Activated naive CD4-positive, alpha-beta T cell treated with anti-CD3 and anti-CD28 coated beads for 36 hours (primary cell): ENCODE measurements at regions of chr9 and their contacts with region 1.

Region 1: DNA sequence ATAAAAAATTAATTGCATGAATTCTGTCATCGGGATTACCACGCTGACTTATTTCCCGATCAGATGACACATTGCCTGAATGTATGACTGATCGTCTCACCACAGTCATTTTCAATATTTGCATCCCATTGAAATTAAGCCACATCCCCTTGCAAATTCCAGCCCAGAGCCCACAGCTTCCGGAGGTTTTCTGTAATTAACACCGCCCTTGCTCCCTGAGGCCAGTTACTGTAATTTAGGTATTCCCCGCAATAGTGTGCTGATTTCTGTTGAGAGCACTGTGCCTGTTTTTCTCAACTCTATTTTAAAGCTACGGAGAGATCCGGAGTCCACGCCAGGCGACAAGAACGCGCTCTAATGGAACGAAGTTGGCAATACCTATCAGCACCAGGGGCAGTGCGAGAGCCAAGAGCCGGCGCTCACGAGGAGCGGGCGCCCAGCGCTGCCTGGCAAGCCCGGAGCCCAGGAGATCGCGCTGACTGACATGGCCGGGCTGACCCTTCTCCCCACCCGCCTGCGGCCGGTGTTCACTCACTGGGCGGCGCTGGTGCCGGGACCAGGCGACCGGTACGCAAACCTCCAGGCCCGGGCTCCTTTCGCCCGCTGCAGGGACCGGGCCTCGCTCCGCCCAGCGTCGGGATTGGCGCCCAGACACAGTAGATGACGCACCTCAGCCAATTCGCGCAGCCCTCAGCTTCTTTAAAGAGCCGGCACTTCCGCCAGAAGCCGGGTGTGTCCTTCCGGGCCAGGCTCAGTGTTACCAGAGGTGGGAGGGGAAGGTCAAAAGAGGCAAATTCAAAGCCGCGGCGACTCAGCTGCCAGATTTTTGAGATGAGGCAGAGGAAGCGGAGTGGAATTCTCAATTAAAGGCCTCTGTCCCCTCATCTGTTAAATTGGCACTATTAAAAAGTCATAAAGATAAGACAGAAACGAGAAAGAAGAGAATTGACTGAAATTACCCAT is at the start of gene PLGRKT:
- DNase-seq: peak; percentile 95
- H3K4me3 Mint-ChIP-seq: peak within 1 kb of the TSS; percentile 92
- H3K27ac Mint-ChIP-seq: peak within 1 kb of the TSS; percentile 98
- H3K4me1 Mint-ChIP-seq: peaks cover 51% of the 10 kb centered on the region
- H3K27me3 Mint-ChIP-seq: no peaks in the 10 kb centered on the region
- total RNA-seq, gene PLGRKT: 48.9 to 51.4 TPM

Region 2: DNA sequence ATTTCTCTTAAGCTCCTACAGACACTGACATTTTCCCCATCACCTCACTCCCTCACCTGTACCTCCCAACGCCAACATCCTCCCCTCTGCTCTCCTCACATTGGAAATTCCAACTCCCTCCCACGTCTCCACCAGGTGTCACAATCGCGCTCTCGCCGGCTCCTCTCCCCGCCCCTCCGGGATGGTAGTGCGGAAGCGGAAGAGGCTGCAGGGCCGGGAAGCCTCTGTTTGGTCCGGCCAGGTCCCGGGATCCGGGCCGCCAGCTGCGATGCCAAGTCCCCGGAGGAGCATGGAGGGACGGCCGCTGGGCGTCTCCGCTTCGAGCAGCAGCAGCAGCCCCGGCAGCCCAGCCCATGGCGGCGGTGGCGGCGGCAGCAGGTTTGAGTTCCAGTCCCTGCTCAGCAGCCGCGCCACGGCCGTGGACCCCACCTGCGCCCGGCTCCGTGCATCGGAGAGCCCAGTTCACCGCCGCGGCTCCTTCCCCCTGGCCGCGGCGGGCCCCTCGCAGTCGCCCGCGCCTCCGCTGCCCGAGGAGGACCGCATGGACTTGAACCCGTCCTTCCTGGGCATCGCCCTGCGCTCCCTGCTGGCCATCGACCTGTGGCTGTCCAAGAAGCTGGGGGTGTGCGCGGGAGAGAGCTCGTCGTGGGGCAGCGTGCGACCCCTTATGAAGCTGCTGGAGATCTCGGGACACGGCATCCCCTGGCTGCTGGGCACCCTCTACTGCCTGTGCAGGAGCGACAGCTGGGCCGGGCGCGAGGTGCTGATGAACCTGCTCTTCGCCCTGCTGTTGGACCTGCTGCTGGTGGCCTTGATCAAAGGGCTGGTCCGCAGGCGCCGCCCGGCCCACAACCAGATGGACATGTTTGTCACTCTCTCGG is 775.2 kb before region 1 on chr9 and contains the start of gene PLPP6:
- CTCF ChIA-PET with region 1: no interaction called
- intact Hi-C with region 1: loop called (anchors 5 kb)
- DNase-seq: peak; percentile 91
- H3K4me3 Mint-ChIP-seq: peak within 1 kb of the TSS; percentile 87
- H3K27ac Mint-ChIP-seq: peak within 1 kb of the TSS; percentile 77
- H3K4me1 Mint-ChIP-seq: peaks cover 52% of the 10 kb centered on the region
- H3K27me3 Mint-ChIP-seq: no peaks in the 10 kb centered on the region
- total RNA-seq, gene PLPP6: 4.6 to 5.3 TPM

Region 3: GRCh38 chr9:4792572-4793458 is 644.7 kb before region 1 on chr9 and contains the start of gene RCL1:
- CTCF ChIA-PET with region 1: no interaction called
- intact Hi-C with region 1: loop called (anchors 1 kb)
- DNase-seq: peak; percentile 97
- H3K4me3 Mint-ChIP-seq: peak within 1 kb of the TSS; percentile 96
- H3K27ac Mint-ChIP-seq: peak within 1 kb of the TSS; percentile 84
- H3K4me1 Mint-ChIP-seq: peaks cover 49% of the 10 kb centered on the region
- H3K27me3 Mint-ChIP-seq: no peaks in the 10 kb centered on the region
- total RNA-seq, gene RCL1: 26.9 to 30.7 TPM

Region 4: DNA sequence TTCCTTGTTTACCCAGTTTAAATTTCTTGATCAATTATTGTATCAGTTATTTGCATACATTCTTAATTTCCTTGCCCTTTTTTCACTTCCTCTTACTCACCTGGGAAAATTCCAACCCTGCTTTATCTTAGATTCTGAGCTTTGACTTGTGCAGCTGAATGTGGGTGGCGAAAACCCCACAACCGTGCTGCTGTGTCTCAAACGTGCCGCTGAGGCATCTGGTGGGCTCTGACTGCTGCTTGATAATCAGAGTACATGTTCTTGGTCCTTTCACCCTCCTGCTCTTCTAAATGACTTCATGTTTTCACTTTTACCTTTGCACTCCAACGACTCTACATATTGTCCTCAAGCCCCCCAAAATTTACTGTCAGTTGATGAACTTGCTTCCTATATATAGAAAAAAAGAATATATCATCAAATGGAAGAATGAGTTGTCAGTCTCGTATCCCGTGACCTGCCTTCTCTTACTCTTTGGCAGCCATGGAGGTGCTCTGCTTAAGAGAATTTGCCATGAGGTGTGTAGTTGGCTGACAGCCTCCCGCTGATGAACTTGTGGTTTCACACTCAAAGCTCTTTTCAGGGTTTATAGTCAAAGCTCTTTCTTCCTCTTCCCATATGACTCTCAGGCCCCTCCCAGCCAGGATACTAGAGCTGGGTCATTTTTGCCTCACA is 466.4 kb before region 1 on chr9:
- CTCF ChIA-PET with region 1: no interaction called
- intact Hi-C with region 1: loop called (anchors 1 kb)
- DNase-seq: peak; percentile 91
- H3K4me3 Mint-ChIP-seq: no peak overlapping the region
- H3K27ac Mint-ChIP-seq: no peak overlapping the region
- H3K4me1 Mint-ChIP-seq: peaks cover 23% of the 10 kb centered on the region
- H3K27me3 Mint-ChIP-seq: no peaks in the 10 kb centered on the region

Region 5: GRCh38 chr9:5364294-5365024 is 73.1 kb before region 1 on chr9:
- CTCF ChIA-PET with region 1: no interaction called
- intact Hi-C with region 1: loop called (anchors 1 kb)
- DNase-seq: peak; percentile 22
- H3K4me3 Mint-ChIP-seq: no peak overlapping the region
- H3K27ac Mint-ChIP-seq: peak overlapping the region; percentile 35
- H3K4me1 Mint-ChIP-seq: peaks cover 25% of the 10 kb centered on the region
- H3K27me3 Mint-ChIP-seq: no peaks in the 10 kb centered on the region

Region 6: GRCh38 chr9:5416962-5417361 is 20.6 kb before region 1 on chr9:
- CTCF ChIA-PET with region 1: no interaction called
- intact Hi-C with region 1: no loop called
- DNase-seq: no peak
- H3K4me3 Mint-ChIP-seq: no peak overlapping the region
- H3K27ac Mint-ChIP-seq: no peak overlapping the region
- H3K4me1 Mint-ChIP-seq: peaks cover 14% of the 10 kb centered on the region
- H3K27me3 Mint-ChIP-seq: no peaks in the 10 kb centered on the region

Region 7: GRCh38 chr9:5582835-5583195 is 145.3 kb after region 1 on chr9:
- CTCF ChIA-PET with region 1: interaction called, 47 read pairs
- intact Hi-C with region 1: loop called (anchors 1 kb)
- DNase-seq: peak; percentile 72
- H3K4me3 Mint-ChIP-seq: peak overlapping the region; percentile 27
- H3K27ac Mint-ChIP-seq: peak overlapping the region; percentile 78
- H3K4me1 Mint-ChIP-seq: peaks cover 66% of the 10 kb centered on the region
- H3K27me3 Mint-ChIP-seq: no peaks in the 10 kb centered on the region